Activated naive CD4-positive, alpha-beta T cell treated with anti-CD3 and anti-CD28 coated beads for 36 hours (primary cell): ENCODE measurements at regions of chrX and their contacts with region 1.

Region 1: GRCh38 chrX:103254921-103255493 is at the start of gene TCEAL8:
- DNase-seq: peak; percentile 79
- H3K4me3 Mint-ChIP-seq: peak within 1 kb of the TSS; percentile 94
- H3K27ac Mint-ChIP-seq: peak within 1 kb of the TSS; percentile 96
- H3K4me1 Mint-ChIP-seq: peaks cover 14% of the 10 kb centered on the region
- H3K27me3 Mint-ChIP-seq: no peaks in the 10 kb centered on the region
- total RNA-seq, gene TCEAL8: 24.5 to 27.7 TPM

Region 2: DNA sequence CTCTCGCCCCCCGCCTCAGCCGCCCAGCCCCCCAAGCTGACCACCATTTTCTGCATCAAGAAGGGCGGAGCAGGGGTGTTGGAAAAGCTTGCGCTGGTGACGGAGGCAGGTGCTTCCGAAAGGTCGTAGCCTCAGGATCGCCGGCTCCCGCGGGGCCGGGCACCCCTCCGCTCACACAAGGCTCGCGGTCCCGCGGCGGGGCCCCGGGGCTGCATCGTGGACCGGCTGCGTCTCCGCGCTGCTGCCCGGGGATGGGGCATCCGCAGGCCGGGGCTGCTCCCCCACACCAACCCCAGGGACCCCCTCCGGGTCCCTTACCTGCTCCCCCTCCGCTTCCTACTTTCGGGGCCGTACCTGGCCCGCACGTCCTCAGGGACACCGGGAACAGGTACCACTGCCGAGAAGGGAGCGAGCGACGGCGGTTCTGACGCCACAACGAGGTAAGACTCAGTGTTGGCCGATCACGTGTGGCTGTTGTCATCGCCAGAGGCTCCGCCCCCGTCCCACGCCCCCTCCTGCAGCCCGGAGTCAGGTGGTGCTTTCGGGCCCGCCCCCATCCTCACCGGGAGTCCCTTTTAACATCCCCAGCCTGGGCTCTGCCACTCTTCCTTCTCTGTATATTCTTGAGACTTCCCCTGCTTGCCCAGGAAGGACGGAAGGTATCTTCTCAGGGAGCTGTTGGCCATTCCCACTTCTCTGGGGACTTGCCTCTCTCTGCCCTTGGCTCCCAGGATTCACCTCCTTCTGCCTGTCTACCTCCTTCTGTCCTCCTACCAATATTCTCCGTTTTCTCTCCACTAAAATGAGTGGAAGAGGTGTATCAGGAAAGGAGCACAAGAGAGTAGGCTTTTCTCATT is 55.8 kb after region 1 on chrX and contains the start of gene BEX2:
- CTCF ChIA-PET with region 1: no interaction called
- intact Hi-C with region 1: loop called (anchors 1 kb)
- DNase-seq: peak; percentile 91
- H3K4me3 Mint-ChIP-seq: peak within 1 kb of the TSS; percentile 70
- H3K27ac Mint-ChIP-seq: peak within 1 kb of the TSS; percentile 53
- H3K4me1 Mint-ChIP-seq: peaks cover 9% of the 10 kb centered on the region
- H3K27me3 Mint-ChIP-seq: no peaks in the 10 kb centered on the region
- total RNA-seq, gene BEX2: 16.0 to 18.9 TPM

Region 3: GRCh38 chrX:103423955-103424638 is 169.1 kb after region 1 on chrX:
- CTCF ChIA-PET with region 1: no interaction called
- intact Hi-C with region 1: no loop called
- DNase-seq: no peak
- H3K4me3 Mint-ChIP-seq: no peak overlapping the region
- H3K27ac Mint-ChIP-seq: no peak overlapping the region
- H3K4me1 Mint-ChIP-seq: no peaks in the 10 kb centered on the region
- H3K27me3 Mint-ChIP-seq: no peaks in the 10 kb centered on the region

Region 4: GRCh38 chrX:103495786-103496185 is 240.8 kb after region 1 on chrX:
- CTCF ChIA-PET with region 1: no interaction called
- intact Hi-C with region 1: no loop called
- DNase-seq: no peak
- H3K4me3 Mint-ChIP-seq: no peak overlapping the region
- H3K27ac Mint-ChIP-seq: no peak overlapping the region
- H3K4me1 Mint-ChIP-seq: no peaks in the 10 kb centered on the region
- H3K27me3 Mint-ChIP-seq: peaks cover 2% of the 10 kb centered on the region